ENCODE measurements at regions of chr19 and their contacts with region 1.

Region 1: GRCh38 chr19:35740423-35741202 is 1.6 kb downstream of the IGFLR1 start:
- DNase-seq: peak; percentile 91
- H3K4me3 ChIP-seq: peak overlapping the region; percentile 69
- H3K27ac ChIP-seq: peak overlapping the region; percentile 78
- H3K27me3 ChIP-seq: no peaks in the 10 kb centered on the region
- CTCF ChIP-seq: 0 out of 2 replicates have a peak, but pooled peaks have one; percentile 26

Region 2: GRCh38 chr19:35592226-35592625 is 148.4 kb before region 1 on chr19:
- CTCF ChIA-PET with region 1: no interaction called
- POLR2A ChIA-PET with region 1: no interaction called
- DNase-seq: peak; percentile 3
- H3K4me3 ChIP-seq: no peak overlapping the region
- H3K27ac ChIP-seq: no peak overlapping the region
- H3K27me3 ChIP-seq: peaks cover 6% of the 10 kb centered on the region
- CTCF ChIP-seq: peak; percentile 56

Region 3: DNA sequence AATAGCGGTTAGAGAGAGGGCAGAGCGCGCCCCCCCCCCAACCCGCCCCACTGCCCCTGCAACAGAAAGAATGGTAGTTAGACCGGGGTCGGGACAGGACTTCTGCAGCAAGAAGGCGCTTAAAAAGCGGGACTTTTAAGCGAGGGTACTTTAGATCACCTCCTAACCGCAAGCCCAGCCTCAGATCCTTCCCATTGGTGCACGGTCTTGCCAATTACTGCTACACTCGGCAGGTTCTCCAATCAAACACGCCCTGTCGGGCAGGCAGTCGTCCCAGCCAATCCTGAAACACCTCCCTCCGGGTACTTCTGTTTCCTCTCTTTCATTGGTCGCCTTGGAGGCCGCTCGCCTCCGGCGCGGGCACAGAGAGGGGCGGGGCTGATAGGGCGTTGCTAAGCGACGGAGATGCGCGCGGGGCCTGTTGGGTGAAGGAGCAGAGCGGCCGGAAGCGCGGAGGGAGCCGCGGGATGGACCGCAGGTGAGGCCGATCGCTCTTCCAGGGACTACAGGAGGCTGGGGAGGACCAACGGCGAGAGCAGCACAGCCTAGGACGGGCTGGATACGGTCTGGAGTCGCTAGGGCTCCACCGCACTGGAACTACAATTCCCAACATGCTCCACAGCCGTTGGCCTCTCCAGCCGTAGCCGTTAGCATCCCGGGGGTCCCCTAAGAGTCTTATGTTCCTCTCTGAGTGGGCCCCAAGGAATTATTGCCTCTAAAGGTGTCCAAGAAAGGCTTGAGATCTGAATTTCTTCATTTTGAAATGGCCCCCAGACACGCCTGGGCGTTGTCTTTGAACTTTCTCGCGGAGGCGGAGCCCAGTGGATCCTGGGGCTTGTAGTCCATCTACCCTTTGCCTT is 17.4 kb after region 1 on chr19 and contains the start of gene PROSER3:
- CTCF ChIA-PET with region 1: interaction called, 7 read pairs
- POLR2A ChIA-PET with region 1: interaction called, 16 read pairs
- DNase-seq: peak; percentile 100
- H3K4me3 ChIP-seq: peak within 1 kb of the TSS; percentile 100
- H3K27ac ChIP-seq: peak within 1 kb of the TSS; percentile 99
- H3K27me3 ChIP-seq: no peaks in the 10 kb centered on the region
- CTCF ChIP-seq: no peak
- polyA plus RNA-seq, gene PROSER3: 5.2 and 7.1 TPM in 2 replicates

Measured in AG04450 (cell line).